Adrenal gland (tissue), 19 donors: ENCODE measurements at regions of chr9 and their contacts with region 1.

Region 1: DNA sequence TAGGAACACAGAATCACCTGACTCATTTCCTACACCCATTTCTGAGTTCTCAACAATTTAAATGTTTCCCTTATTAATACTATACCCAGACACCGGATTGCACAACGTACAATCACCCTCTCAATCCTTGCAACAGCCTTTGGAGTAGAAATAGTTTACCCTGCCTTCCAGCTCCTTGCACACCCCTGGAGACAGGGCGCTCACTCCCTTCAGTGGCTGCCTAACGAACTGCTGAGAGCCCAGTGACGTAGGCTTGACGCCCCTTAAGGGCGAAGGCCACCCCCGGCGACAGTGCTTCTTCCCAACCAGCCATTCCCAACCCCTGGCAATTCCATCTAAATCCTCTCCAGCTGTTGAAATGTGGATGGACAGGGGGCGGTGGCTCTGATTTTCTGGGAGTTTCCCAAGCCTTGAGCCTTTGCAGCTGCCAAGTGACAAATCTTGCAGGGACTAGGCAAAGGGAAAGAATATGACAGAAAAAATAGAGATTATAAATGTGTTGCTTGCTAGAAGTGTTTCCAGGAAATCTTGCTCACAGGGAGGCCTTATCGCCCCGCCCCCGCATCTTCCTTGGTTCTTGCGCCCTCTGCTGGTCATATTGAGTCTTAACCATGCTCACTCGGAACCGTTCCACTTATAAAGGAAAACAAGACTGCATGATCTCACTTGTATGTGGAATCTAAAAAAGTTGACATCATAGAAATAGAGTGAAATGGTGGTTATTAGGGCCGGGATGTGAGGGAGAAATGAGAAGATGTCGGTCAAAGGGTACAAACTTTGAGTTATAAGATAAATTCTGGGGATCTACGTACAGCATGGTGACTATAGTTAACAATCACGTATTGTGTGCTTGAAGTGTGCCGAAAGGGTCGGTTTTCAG is 7.6 kb upstream of the BARX1 start:
- DNase-seq: peak; percentile 81 to 96 (median 88)
- H3K4me3 ChIP-seq: no peak overlapping the region
- H3K27ac ChIP-seq: no peak overlapping the region
- H3K4me1 ChIP-seq: peaks cover 4 to 32% of the 10 kb centered on the region in 2 donors
- H3K27me3 ChIP-seq: peaks cover 57% of the 10 kb centered on the region
- CTCF ChIP-seq: peak; percentile 81 to 91 (median 88)
- POLR2A ChIP-seq: no peak

Region 2: GRCh38 chr9:93682232-93682968 is 280.4 kb before region 1 on chr9:
- intact Hi-C with region 1: loop called (anchors 1 to 5 kb)
- DNase-seq: peak; percentile 55 to 82 (median 68)
- H3K4me3 ChIP-seq: no peak overlapping the region
- H3K27ac ChIP-seq: no peak overlapping the region
- H3K4me1 ChIP-seq: no peaks in the 10 kb centered on the region
- H3K27me3 ChIP-seq: no peaks in the 10 kb centered on the region
- CTCF ChIP-seq: peak; percentile 68 to 88 (median 80)
- POLR2A ChIP-seq: no peak

Region 3: GRCh38 chr9:93827545-93828330 is 135.1 kb before region 1 on chr9:
- intact Hi-C with region 1: loop called in 1 of 2 experiments (anchors 10 kb)
- DNase-seq: peak in 6 of 7 donors; percentile 31 to 62 (median 55)
- H3K4me3 ChIP-seq: peak overlapping the region in 1 of 4 donors; percentile 41
- H3K27ac ChIP-seq: no peak overlapping the region
- H3K4me1 ChIP-seq: no peaks in the 10 kb centered on the region
- H3K27me3 ChIP-seq: peaks cover 13% of the 10 kb centered on the region
- CTCF ChIP-seq: peak; percentile 48 to 82 (median 68)
- POLR2A ChIP-seq: no peak